Lower lobe of right lung (tissue), 2 donors: ENCODE measurements at regions of chr6 and their contacts with region 1.

Region 1: DNA sequence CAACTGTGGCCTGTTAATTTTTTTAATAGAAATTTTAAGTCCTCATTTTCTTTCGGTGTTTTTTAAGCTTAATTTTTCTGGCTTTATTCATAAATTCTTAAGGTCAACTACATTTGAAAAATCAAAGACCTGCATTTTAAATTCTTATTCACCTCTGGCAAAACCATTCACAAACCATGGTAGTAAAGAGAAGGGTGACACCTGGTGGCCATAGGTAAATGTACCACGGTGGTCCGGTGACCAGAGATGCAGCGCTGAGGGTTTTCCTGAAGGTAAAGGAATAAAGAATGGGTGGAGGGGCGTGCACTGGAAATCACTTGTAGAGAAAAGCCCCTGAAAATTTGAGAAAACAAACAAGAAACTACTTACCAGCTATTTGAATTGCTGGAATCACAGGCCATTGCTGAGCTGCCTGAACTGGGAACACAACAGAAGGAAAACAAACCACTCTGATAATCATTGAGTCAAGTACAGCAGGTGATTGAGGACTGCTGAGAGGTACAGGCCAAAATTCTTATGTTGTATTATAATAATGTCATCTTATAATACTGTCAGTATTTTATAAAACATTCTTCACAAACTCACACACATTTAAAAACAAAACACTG is 10.1 kb downstream of the HFE start:
- DNase-seq: no peak
- ATAC-seq: peak; percentile 87 to 88
- H3K4me3 ChIP-seq: no peak overlapping the region
- H3K27ac ChIP-seq: no peak overlapping the region
- H3K4me1 ChIP-seq: no peaks in the 10 kb centered on the region
- H3K27me3 ChIP-seq: no peaks in the 10 kb centered on the region
- CTCF ChIP-seq: peak; percentile 81

Region 2: DNA sequence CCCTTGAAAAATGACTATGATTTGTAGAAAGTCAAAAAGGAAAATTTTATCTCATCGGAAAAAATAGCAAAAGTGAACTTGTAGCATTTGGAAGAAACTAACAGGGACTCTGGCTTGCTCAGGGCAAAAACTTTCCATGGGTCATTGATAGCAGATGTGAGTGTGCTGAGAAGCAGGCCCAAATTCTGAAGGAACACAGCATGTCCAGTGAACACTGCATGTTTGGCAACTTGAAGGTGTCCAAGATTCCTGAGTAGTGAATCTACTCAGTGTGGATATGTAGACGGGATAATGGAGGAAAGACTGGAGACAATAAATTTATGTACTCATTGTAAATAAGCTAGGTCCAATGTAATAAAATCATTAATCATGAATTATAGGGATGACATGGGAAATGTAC is 175.1 kb before region 1 on chr6:
- intact Hi-C with region 1: no loop called
- DNase-seq: no peak
- ATAC-seq: no peak
- H3K4me3 ChIP-seq: no peak overlapping the region
- H3K27ac ChIP-seq: no peak overlapping the region
- H3K4me1 ChIP-seq: no peaks in the 10 kb centered on the region
- H3K27me3 ChIP-seq: no peaks in the 10 kb centered on the region
- CTCF ChIP-seq: no peak

Region 3: GRCh38 chr6:25962149-25963127 is 134.9 kb before region 1 on chr6 and contains the start of gene TRIM38:
- intact Hi-C with region 1: no loop called
- DNase-seq: peak; percentile 52
- ATAC-seq: peak; percentile 92 to 97
- H3K4me3 ChIP-seq: peak within 1 kb of the TSS; percentile 65
- H3K27ac ChIP-seq: peak within 1 kb of the TSS; percentile 90
- H3K4me1 ChIP-seq: peaks cover 52% of the 10 kb centered on the region
- H3K27me3 ChIP-seq: no peaks in the 10 kb centered on the region
- CTCF ChIP-seq: no peak
- total RNA-seq, gene TRIM38: 23.0 TPM

Region 4: GRCh38 chr6:26065952-26066380 is 31.4 kb before region 1 on chr6:
- intact Hi-C with region 1: loop called (anchors 2 kb)
- DNase-seq: no peak
- ATAC-seq: peak; percentile 96 to 97
- H3K4me3 ChIP-seq: no peak overlapping the region
- H3K27ac ChIP-seq: no peak overlapping the region
- H3K4me1 ChIP-seq: peaks cover 6% of the 10 kb centered on the region
- H3K27me3 ChIP-seq: no peaks in the 10 kb centered on the region
- CTCF ChIP-seq: peak; percentile 81